ENCODE measurements at regions of chr5 and their contacts with region 1.

Region 1: GRCh38 chr5:94111209-94112004 is 370.0 kb upstream of the POU5F2 start:
- DNase-seq: peak; percentile 88
- H3K4me3 Mint-ChIP-seq: peak overlapping the region; percentile 93
- H3K27ac Mint-ChIP-seq: peak overlapping the region; percentile 89
- H3K4me1 Mint-ChIP-seq: peaks cover 31% of the 10 kb centered on the region
- H3K27me3 Mint-ChIP-seq: peaks cover 3% of the 10 kb centered on the region

Region 2: GRCh38 chr5:93273176-93273575 is 838.2 kb before region 1 on chr5:
- intact Hi-C with region 1: no loop called
- DNase-seq: no peak
- H3K4me3 Mint-ChIP-seq: no peak overlapping the region
- H3K27ac Mint-ChIP-seq: no peak overlapping the region
- H3K4me1 Mint-ChIP-seq: no peaks in the 10 kb centered on the region
- H3K27me3 Mint-ChIP-seq: peaks cover 2% of the 10 kb centered on the region

Region 3: GRCh38 chr5:94389515-94389899 is 278.1 kb after region 1 on chr5:
- intact Hi-C with region 1: loop called (anchors 5 kb)
- DNase-seq: no peak
- H3K4me3 Mint-ChIP-seq: no peak overlapping the region
- H3K27ac Mint-ChIP-seq: peak overlapping the region; percentile 92
- H3K4me1 Mint-ChIP-seq: peaks cover 16% of the 10 kb centered on the region
- H3K27me3 Mint-ChIP-seq: no peaks in the 10 kb centered on the region

Region 4: GRCh38 chr5:94700592-94700991 is 589.2 kb after region 1 on chr5:
- intact Hi-C with region 1: loop called (anchors 2 kb)
- DNase-seq: no peak
- H3K4me3 Mint-ChIP-seq: no peak overlapping the region
- H3K27ac Mint-ChIP-seq: peak overlapping the region; percentile 61
- H3K4me1 Mint-ChIP-seq: peaks cover 15% of the 10 kb centered on the region
- H3K27me3 Mint-ChIP-seq: no peaks in the 10 kb centered on the region